H1 (cell line): ENCODE measurements at regions of chr22 and their contacts with region 1.

Region 1: GRCh38 chr22:39319270-39320022 is at the start of gene RPL3:
- DNase-seq: peak; percentile 90 to 99
- H3K4me3 ChIP-seq: peak within 1 kb of the TSS; percentile 95 to 99 (median 98)
- H3K27ac ChIP-seq: peak within 1 kb of the TSS; percentile 97
- H3K4me1 ChIP-seq: peaks cover 0 to 15% (median 3%) of the 10 kb centered on the region in 4 experiments; a peak in 6 of 7 replicates
- H3K27me3 ChIP-seq: no peaks in the 10 kb centered on the region
- CTCF ChIP-seq: peak in 2 of 3 experiments; percentile 5 to 12; a peak in 3 of 4 replicates
- EP300 ChIP-seq: peak in 1 of 2 experiments; percentile 46; a peak in 1 of 3 replicates
- POLR2A ChIP-seq: peak; percentile 99 to 100
- RAD21 ChIP-seq: no peak
- total RNA-seq, gene RPL3: 2,801 and 2,865 TPM in 2 replicates

Region 2: DNA sequence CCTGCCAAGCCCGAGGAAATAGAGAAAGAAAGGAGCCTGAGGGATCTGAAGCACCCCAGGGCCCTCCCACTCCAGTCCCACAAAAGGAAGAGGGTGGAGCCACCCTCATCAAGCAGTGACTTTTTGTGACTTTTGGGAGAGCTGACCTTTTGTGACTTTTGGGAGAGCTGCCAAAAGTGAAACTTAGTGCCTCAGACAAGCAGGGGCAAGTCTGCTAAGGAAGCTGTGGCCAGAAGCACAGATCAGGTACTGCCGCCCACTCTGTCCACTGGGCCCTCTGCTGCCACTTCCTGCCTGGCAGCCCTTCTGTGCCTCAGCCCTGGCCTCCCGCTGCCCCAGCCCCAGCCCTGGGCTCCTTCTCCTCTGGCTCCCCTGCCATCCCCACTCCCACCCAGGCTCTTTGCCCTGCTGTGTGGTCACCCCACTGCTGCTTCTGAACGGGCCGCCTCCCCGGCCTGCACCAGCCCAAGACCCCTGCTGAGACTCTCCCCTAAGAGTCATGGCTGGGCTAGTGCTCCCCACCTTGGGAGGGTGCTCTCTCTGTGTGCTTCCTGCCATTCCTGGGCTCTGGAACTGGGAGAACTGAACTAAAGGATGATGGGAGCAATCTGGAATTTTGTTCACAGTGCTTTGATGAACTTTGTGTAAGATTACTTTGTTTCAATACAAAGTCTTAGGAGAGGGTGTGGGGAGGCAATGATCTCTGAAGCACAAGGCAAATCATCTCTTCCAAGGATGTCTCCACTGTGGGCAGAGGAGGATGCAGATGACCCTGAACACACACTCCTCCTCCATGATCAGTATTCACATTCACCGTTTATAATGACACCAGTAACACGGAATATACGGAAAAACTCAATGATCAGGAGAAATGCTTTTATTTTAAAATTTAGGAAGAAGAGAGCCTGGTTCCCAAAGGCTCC is 222.1 kb before region 1 on chr22 and contains the start of gene APOBEC3H:
- CTCF ChIA-PET with region 1: no interaction called
- POLR2A ChIA-PET with region 1: no interaction called
- DNase-seq: no peak
- H3K4me3 ChIP-seq: no peak within 1 kb of the TSS
- H3K27ac ChIP-seq: peak within 1 kb of the TSS; percentile 39; the same call in 1 of the 2 replicates
- H3K4me1 ChIP-seq: peaks cover 0 to 24% (median 9%) of the 10 kb centered on the region in 4 experiments; a peak in 6 of 7 replicates
- H3K27me3 ChIP-seq: no peaks in the 10 kb centered on the region
- CTCF ChIP-seq: no peak
- EP300 ChIP-seq: no peak
- POLR2A ChIP-seq: no peak
- RAD21 ChIP-seq: no peak
- total RNA-seq, gene APOBEC3H: 0.47 and 0.48 TPM in 2 replicates

Region 3: DNA sequence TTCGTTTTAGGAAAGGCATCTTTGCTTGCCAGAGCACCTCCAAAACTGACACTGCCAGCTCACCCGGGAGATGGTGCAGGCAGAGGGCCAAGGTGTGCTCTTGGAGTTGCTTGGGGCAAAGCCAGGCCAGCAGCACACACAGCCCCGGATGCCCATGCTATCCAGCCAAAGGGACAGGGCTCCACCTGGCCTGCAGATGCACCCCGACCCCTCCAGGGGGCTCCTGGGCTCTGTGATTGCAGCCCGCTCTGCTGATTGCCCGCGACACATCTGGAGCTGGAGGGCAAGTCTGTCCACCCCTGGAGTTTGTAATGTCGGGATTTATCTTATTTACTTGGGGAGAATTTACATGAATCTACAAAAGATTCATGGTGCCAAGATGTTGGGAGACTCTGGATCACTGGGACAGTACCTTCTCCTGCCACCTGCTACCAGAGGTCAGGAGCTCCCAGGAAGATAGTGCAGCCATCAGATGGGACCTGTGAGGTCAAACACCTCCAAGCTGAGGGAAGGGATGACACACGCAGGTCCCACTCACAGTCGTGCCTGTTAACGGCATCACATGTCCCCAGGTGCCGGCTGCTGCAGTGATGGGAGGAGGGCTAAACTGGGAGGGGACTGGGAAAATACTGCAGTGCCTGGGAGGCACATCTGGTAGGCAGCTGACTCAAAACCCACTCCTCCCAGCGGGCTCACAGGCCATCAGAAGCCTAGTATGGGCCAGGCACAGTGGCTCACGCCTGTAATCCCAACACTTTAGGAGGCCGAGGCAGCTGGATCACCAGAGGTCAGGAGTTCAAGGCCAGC is 184.2 kb before region 1 on chr22:
- CTCF ChIA-PET with region 1: interaction called, 13 read pairs
- POLR2A ChIA-PET with region 1: interaction called, 67 read pairs
- DNase-seq: peak; percentile 50 to 90
- H3K4me3 ChIP-seq: no peak overlapping the region
- H3K27ac ChIP-seq: no peak overlapping the region
- H3K4me1 ChIP-seq: peaks cover 4 to 17% (median 11%) of the 10 kb centered on the region in 4 experiments; a peak in 4 of 7 replicates
- H3K27me3 ChIP-seq: no peaks in the 10 kb centered on the region
- CTCF ChIP-seq: peak; percentile 85 to 92 (median 92)
- EP300 ChIP-seq: no peak
- POLR2A ChIP-seq: no peak
- RAD21 ChIP-seq: peak; percentile 88 to 94

Region 4: DNA sequence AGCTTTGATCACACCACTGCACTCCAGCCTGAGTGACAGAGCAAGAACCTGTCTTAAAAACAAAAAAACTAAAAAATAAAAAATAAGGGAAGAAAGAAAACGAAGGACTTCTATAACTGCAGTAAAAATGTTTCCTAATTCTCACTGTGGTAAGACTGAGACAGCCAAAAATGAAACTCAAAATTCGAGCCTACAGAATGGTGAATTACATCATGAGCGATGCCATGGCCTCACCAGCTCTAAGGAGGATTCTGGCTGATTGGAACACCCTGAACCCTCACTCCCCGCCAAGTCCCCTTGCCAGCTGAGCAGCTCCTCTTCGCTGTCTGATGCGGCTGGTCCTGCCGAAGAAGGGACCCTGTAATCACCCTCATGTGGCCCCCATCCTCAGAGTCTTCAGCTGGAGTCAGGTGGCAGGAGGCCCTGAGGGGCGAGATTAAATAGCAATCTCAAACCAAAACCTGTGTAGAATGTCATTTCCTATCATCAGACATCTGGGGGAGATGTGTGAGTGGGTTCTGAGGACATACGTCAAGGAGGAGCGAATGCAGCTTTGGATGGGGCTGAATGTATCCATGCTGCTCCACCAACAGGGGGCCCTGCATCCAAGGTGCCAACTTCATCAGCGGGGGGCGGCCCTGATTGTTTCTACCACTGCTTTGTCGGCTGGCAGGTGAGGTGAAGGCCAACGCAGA is 103.9 kb before region 1 on chr22:
- CTCF ChIA-PET with region 1: interaction called, 4 read pairs
- POLR2A ChIA-PET with region 1: interaction called, 28 read pairs
- DNase-seq: peak in 1 of 2 experiments; percentile 67
- H3K4me3 ChIP-seq: no peak overlapping the region
- H3K27ac ChIP-seq: no peak overlapping the region; the same call in 1 of the 2 replicates
- H3K4me1 ChIP-seq: peaks cover 15 to 30% (median 20%) of the 10 kb centered on the region in 4 experiments
- H3K27me3 ChIP-seq: no peaks in the 10 kb centered on the region
- CTCF ChIP-seq: peak; percentile 48 to 79 (median 76); a peak in 3 of 4 replicates
- EP300 ChIP-seq: no peak
- POLR2A ChIP-seq: no peak
- RAD21 ChIP-seq: peak; percentile 42 to 59

Region 5: DNA sequence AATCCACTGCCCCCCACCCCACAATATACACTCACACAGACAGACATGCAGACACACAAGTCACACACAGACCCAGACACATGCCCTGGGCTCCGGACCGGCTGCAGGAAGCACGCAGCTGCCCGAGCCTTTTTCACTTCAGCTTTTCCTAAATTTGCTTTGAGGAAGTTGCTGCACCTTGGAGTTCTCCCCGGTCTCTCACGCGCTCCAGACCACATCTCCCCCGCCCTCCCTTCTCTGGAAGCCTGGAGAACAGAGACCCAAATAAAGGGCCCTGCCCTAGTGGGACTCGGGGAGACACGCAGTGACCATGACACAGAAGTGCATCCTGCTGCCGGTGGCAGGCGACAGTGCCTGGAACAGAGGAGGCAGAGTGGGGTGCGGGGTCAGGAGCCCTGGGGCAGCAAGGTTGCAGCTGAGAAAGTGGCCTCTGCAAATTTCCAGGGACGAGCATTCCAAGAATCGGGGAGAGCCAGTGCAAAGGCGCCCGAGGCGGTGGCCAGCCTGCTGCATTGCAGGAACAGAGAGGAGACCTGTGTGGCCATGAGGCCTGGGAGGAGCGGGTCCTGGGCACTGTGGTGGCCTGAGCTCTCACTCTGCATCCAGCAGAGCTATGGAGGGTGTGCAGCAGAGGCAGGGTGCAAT is 19.1 kb before region 1 on chr22:
- CTCF ChIA-PET with region 1: interaction called, 32 read pairs
- POLR2A ChIA-PET with region 1: interaction called, 692 read pairs
- DNase-seq: no peak
- H3K4me3 ChIP-seq: no peak overlapping the region
- H3K27ac ChIP-seq: no peak overlapping the region
- H3K4me1 ChIP-seq: peaks cover 2 to 24% (median 7%) of the 10 kb centered on the region in 4 experiments
- H3K27me3 ChIP-seq: no peaks in the 10 kb centered on the region; a peak in 1 of 7 replicates
- CTCF ChIP-seq: no peak
- EP300 ChIP-seq: no peak
- POLR2A ChIP-seq: no peak
- RAD21 ChIP-seq: peak in 1 of 2 experiments; percentile 11; a peak in 2 of 4 replicates

Region 6: DNA sequence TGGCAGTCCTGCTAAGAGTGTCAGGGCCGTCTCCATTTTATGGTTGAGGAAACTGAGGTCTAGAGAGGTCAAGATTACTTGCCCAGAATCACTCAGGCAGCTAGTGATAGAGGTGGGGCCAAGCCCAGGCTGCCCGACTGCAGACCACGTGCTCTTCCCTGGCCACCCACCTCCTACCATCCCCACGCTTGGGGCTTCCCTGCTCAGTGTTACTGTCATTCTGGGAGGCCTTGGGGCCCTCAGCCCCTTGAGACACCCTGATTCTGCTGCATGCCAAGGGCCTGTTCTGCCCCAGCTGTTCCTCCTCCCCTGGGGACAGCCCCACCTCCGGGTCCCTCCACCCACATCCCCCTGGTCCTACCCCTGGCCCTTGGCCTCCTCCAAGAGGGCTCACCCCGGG is 63.0 kb after region 1 on chr22:
- CTCF ChIA-PET with region 1: interaction called, 3 read pairs
- POLR2A ChIA-PET with region 1: interaction called, 10 read pairs
- DNase-seq: no peak
- H3K4me3 ChIP-seq: no peak overlapping the region
- H3K27ac ChIP-seq: no peak overlapping the region
- H3K4me1 ChIP-seq: 0 out of 7 replicates have a peak, but pooled peaks cover 0 to 5% (median 0%) of the 10 kb centered on the region in 4 experiments
- H3K27me3 ChIP-seq: no peaks in the 10 kb centered on the region; a peak in 1 of 7 replicates
- CTCF ChIP-seq: no peak
- EP300 ChIP-seq: no peak
- POLR2A ChIP-seq: no peak
- RAD21 ChIP-seq: no peak

Region 7: GRCh38 chr22:39446295-39446721 is 126.9 kb after region 1 on chr22:
- CTCF ChIA-PET with region 1: no interaction called
- POLR2A ChIA-PET with region 1: interaction called, 16 read pairs
- DNase-seq: peak in 1 of 2 experiments; percentile 69
- H3K4me3 ChIP-seq: no peak overlapping the region
- H3K27ac ChIP-seq: no peak overlapping the region
- H3K4me1 ChIP-seq: peaks cover 0 to 8% (median 6%) of the 10 kb centered on the region in 4 experiments; a peak in 6 of 7 replicates
- H3K27me3 ChIP-seq: no peaks in the 10 kb centered on the region; a peak in 2 of 7 replicates
- CTCF ChIP-seq: peak in 2 of 3 experiments; percentile 14 to 30; a peak in 3 of 4 replicates
- EP300 ChIP-seq: no peak
- POLR2A ChIP-seq: no peak
- RAD21 ChIP-seq: peak in 1 of 2 experiments; percentile 26; a peak in 2 of 4 replicates

Region 8: DNA sequence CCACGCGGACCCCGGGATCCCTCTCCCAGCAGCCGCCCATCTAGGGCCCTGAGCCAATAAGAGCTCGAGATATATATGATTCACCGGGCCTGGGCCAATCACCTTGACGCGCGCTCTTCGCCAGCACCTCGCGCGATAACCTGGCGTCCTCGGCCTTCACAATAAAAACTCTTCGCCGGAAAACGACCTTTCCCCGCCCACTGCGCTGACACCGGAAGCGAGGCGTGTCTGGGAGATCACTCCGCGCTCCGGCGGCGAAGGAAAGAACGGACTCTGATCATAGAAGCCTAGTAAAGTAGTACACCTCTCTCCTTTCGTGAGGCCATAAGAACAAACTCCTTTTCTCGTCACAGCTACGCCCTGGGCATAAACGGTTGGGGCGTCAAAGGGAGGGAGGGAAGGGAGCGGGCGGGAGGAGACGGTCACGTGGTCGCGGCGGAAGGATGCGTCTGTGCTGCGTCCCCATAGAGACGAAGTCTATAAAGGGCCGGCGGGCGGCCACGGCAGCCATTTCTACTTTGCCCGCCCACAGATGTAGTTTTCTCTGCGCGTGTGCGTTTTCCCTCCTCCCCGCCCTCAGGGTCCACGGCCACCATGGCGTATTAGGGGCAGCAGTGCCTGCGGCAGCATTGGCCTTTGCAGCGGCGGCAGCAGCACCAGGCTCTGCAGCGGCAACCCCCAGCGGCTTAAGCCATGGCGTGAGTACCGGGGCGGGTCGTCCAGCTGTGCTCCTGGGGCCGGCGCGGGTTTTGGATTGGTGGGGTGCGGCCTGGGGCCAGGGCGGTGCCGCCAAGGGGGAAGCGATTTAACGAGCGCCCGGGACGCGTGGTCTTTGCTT is 200.8 kb after region 1 on chr22 and contains the start of gene ATF4:
- CTCF ChIA-PET with region 1: interaction called, 3 read pairs
- POLR2A ChIA-PET with region 1: interaction called, 70 read pairs
- DNase-seq: peak; percentile 93 to 96
- H3K4me3 ChIP-seq: peak within 1 kb of the TSS; percentile 93 to 99 (median 95)
- H3K27ac ChIP-seq: peak within 1 kb of the TSS; percentile 99
- H3K4me1 ChIP-seq: peaks cover 0 to 12% (median 5%) of the 10 kb centered on the region in 4 experiments; a peak in 4 of 7 replicates
- H3K27me3 ChIP-seq: peaks cover 0 to 6% (median 2%) of the 10 kb centered on the region in 4 experiments; a peak in 3 of 7 replicates
- CTCF ChIP-seq: no peak
- EP300 ChIP-seq: no peak; a peak in 1 of 3 replicates
- POLR2A ChIP-seq: peak; percentile 96 to 98
- RAD21 ChIP-seq: no peak
- total RNA-seq, gene ATF4: 543 and 553 TPM in 2 replicates

Region 9: GRCh38 chr22:39574779-39575551 is 255.5 kb after region 1 on chr22:
- CTCF ChIA-PET with region 1: no interaction called
- POLR2A ChIA-PET with region 1: no interaction called
- DNase-seq: no peak
- H3K4me3 ChIP-seq: no peak overlapping the region
- H3K27ac ChIP-seq: no peak overlapping the region
- H3K4me1 ChIP-seq: peaks cover 0 to 1% (median 0%) of the 10 kb centered on the region in 4 experiments; a peak in 2 of 7 replicates
- H3K27me3 ChIP-seq: peaks cover 0 to 2% (median 0%) of the 10 kb centered on the region in 4 experiments; a peak in 1 of 7 replicates
- CTCF ChIP-seq: no peak
- EP300 ChIP-seq: no peak
- POLR2A ChIP-seq: no peak
- RAD21 ChIP-seq: no peak